Activated T-helper 1 cell treated with anti-CD3 and anti-CD28 coated beads, Interleukin-12 subunit alpha, Interleukin-12 subunit beta, Interleukin-2, Interleukin-4 antibody, amounts not matched to agents 30 ng/mL and 10 ng/mL and 1 ng/mL, durations not matched to agents 14 hours and 24 hours and 36 hours (primary cell): ENCODE measurements at regions of chr2 and their contacts with region 1.

Region 1: DNA sequence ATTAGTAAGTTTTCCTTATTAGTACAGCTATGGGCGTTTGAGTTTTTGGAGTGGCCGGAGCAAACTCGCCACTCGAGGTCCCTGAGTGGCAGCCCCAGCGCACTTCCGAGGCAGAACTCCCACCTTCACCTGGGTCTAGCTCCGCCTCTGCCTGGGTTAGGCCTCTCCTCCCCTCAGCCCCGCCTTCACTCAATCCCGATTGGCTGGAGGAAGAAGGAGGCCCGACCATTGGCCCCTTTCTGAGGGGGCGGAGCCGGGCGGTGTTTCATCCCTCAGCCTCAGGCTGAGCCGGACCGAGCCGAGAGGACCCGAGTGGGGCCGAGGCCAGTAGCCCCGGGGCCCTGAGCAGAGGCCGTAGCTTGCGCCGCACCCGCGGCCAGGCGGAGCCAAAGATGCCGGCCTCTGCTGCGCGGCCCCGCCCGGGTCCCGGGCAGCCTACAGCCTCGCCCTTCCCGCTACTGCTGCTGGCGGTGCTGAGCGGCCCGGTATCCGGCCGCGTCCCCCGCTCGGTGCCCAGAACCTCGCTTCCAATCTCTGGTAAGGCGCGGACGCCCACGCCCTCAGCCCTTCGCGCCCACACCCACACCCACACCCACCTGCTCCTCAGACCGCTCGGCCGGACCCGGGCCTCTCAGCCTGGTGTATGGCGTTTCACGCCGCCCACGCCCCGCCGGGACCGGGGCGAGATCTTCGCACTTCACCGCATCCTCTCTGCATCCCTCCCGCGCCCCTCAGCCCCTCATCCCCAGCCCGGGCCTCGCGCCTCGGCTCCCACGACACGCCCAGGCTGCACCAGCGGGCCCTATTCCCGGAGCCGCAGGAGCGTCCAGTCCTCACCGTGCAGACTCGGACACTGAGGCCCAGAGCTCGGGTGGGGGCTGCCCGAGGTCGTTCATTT is at the start of gene SEMA4F:
- DNase-seq: peak; percentile 92
- H3K4me3 Mint-ChIP-seq: peak within 1 kb of the TSS; percentile 89
- H3K27ac Mint-ChIP-seq: peak within 1 kb of the TSS; percentile 4
- H3K4me1 Mint-ChIP-seq: peaks cover 12% of the 10 kb centered on the region
- H3K27me3 Mint-ChIP-seq: peaks cover 37% of the 10 kb centered on the region
- total RNA-seq, gene SEMA4F: 2.4 and 3.2 TPM in 2 replicates

Region 2: GRCh38 chr2:73293534-73294171 is 1360.6 kb before region 1 on chr2 and contains the start of gene EGR4:
- intact Hi-C with region 1: loop called (anchors 10 kb)
- DNase-seq: peak; percentile 91
- H3K4me3 Mint-ChIP-seq: peak within 1 kb of the TSS; percentile 75
- H3K27ac Mint-ChIP-seq: peak within 1 kb of the TSS; percentile 63
- H3K4me1 Mint-ChIP-seq: peaks cover 14% of the 10 kb centered on the region
- H3K27me3 Mint-ChIP-seq: peaks cover 72% of the 10 kb centered on the region
- total RNA-seq, gene EGR4: 1.9 TPM in 2 replicates

Region 3: GRCh38 chr2:74482801-74483674 is 171.2 kb before region 1 on chr2 and contains the starts of genes CCDC142 and TTC31:
- intact Hi-C with region 1: loop called (anchors 1 kb)
- DNase-seq: peak; percentile 89
- H3K4me3 Mint-ChIP-seq: peak within 1 kb of the TSS; percentile 99
- H3K27ac Mint-ChIP-seq: peak within 1 kb of the TSS; percentile 99
- H3K4me1 Mint-ChIP-seq: peaks cover 35% of the 10 kb centered on the region
- H3K27me3 Mint-ChIP-seq: no peaks in the 10 kb centered on the region
- total RNA-seq, gene CCDC142: 30.4 and 36.3 TPM in 2 replicates
- total RNA-seq, gene TTC31: 30.2 and 32.2 TPM in 2 replicates

Region 4: DNA sequence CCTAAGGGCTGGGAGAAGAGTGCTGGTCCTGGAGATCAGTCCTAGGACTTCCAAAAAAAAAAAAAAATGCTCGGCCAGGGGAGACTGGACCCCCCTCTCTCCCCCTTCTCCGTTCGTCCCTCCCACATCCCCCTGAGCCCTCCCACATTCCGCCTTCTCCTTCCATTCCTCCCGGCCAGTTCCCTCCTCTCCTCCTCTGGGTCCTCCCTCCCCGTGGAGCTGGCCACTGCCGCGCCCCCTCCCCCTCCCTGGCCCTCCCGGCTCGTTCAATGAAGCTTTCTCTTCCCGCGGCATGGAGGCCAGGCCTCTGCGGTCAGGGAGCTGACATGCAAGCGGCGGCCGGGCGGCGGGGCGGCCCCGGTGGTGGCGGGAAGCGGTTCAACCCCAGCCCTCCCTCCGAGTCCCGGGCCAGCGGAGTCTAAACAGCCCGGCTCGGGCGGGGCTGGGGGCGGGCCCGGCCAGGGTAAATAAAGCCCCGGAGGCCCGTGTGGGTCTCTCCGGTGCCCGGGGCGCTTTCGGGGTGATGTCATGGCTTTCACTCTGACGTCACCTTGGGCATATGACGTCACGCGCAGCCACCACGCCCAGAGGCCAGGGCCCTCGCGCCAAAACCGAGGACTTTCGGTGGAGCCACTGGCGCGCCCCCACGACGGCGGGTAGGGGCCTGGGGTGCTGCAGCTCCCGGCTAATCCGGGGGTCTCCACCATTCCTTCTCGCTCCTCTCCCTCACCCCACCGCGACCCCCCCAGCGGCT is 100.2 kb before region 1 on chr2 and contains the start of gene LOXL3:
- intact Hi-C with region 1: loop called (anchors 1 kb)
- DNase-seq: peak; percentile 77
- H3K4me3 Mint-ChIP-seq: peak within 1 kb of the TSS; percentile 95
- H3K27ac Mint-ChIP-seq: peak within 1 kb of the TSS; percentile 96
- H3K4me1 Mint-ChIP-seq: peaks cover 33% of the 10 kb centered on the region
- H3K27me3 Mint-ChIP-seq: peaks cover 11% of the 10 kb centered on the region
- total RNA-seq, gene LOXL3: 1.9 and 2.0 TPM in 2 replicates

Region 5: DNA sequence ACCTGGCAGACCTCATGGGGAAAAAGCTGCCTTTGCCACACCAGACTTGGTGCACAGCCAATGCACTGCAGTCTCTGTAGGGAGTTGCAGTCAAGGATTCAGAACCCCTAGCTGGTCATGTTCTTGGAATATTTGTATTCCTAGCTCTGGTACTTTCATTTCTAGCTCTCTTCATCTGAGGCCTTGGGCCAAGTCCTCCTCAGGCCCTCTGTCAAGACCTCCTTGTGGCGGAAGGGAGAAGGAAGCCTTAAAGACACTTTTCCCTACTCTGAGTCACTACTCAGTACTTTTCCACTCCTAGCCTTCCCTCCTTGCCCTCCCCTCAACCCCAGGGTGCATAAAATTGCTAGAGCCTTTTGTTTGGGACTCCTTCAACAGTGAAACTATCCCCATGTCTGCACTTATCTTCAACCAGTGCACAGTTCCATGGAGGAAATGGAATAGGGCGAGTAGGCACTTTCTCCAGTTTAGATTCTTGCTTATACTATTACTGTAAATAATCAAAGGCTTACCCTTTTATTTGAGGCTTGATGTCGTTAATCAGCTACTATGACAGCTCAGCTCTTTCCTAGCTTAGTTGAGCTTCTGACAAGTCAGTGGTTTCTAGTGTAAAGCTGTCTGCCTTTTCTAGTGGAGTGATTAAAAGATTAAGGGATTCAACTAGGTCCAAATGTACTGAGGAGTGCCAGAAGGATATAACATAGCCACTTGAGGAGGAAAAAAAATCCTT is 21.9 kb before region 1 on chr2:
- intact Hi-C with region 1: no loop called
- DNase-seq: no peak
- H3K4me3 Mint-ChIP-seq: no peak overlapping the region
- H3K27ac Mint-ChIP-seq: no peak overlapping the region
- H3K4me1 Mint-ChIP-seq: no peaks in the 10 kb centered on the region
- H3K27me3 Mint-ChIP-seq: peaks cover 25% of the 10 kb centered on the region

Region 6: DNA sequence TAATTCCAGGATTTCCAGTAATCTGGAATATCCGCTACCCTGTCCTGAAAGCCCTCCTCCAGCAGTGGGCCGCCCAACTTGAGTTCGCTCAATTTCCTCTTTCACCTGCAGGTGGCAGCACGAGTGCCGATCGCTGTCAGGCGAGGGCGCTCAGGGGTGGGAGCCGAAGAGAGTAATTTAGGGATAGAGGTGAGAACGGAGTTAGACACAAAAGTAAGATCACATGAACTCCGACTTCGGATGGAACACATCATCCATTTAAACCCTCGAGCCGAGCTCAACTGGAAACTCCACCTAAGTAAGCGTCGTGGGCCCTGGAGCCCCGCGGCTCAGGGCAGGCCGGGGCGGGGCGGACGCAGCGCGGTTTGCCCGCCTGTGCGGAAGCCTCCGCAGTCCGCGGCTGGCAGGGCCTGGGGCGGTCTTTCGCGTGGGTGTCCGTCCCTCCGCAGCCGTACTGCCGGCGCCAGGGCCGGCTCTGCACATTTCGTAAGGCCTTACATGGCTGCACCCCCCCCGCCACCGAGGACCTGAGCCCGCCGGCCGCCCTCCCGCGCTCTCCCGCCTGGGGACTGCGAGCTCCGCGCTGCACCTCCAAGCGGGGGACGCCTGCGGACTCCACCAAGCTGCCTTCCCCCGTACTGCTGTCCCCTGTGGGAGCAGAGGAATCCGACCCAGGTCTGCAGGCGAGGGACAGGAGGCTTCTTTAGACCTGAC is 61.0 kb after region 1 on chr2:
- intact Hi-C with region 1: loop called (anchors 2 kb)
- DNase-seq: peak; percentile 75
- H3K4me3 Mint-ChIP-seq: peak overlapping the region; percentile 83
- H3K27ac Mint-ChIP-seq: no peak overlapping the region
- H3K4me1 Mint-ChIP-seq: peaks cover 9% of the 10 kb centered on the region
- H3K27me3 Mint-ChIP-seq: peaks cover 12% of the 10 kb centered on the region

Region 7: GRCh38 chr2:74919827-74920226 is 265.6 kb after region 1 on chr2:
- intact Hi-C with region 1: no loop called
- DNase-seq: peak; percentile 52
- H3K4me3 Mint-ChIP-seq: no peak overlapping the region
- H3K27ac Mint-ChIP-seq: no peak overlapping the region
- H3K4me1 Mint-ChIP-seq: peaks cover 17% of the 10 kb centered on the region
- H3K27me3 Mint-ChIP-seq: peaks cover 21% of the 10 kb centered on the region

Region 8: GRCh38 chr2:75710577-75711253 is 1056.5 kb after region 1 on chr2 and contains the start of gene GCFC2:
- intact Hi-C with region 1: loop called (anchors 10 kb)
- DNase-seq: peak; percentile 83
- H3K4me3 Mint-ChIP-seq: peak within 1 kb of the TSS; percentile 92
- H3K27ac Mint-ChIP-seq: peak within 1 kb of the TSS; percentile 96
- H3K4me1 Mint-ChIP-seq: peaks cover 41% of the 10 kb centered on the region
- H3K27me3 Mint-ChIP-seq: peaks cover 4% of the 10 kb centered on the region
- total RNA-seq, gene GCFC2: 37.5 and 39.9 TPM in 2 replicates